ENCODE measurements at regions of chr14 and their contacts with region 1.

Region 1: DNA sequence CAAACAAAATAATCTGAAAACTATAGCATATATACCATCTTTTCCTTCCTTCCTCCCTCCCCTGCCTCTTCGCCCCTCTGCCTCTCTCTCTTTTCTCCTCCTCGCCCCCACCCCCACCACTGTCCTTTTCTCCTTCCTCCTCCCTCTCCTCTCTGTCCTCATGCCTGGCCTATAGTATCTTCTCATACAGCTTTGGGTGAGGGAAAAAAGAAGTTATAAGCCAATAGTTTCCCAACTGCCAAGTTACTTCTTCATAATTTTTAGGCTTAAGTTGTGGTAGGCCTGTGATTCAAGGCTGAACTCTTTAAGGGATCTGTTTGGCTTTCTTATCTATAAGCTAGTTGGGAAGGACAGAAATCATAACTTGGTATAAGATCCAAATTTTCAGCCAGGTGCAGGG is 9.1 kb downstream of the TMED10 start:
- DNase-seq: no peak
- H3K4me3 ChIP-seq: no peak overlapping the region
- H3K27ac ChIP-seq: no peak overlapping the region
- H3K4me1 ChIP-seq: peaks cover 15% of the 10 kb centered on the region; the same call in 1 of the 2 replicates
- H3K27me3 ChIP-seq: no peaks in the 10 kb centered on the region
- CTCF ChIP-seq: no peak

Region 2: GRCh38 chr14:75188520-75189268 is 21.4 kb after region 1 on chr14:
- CTCF ChIA-PET with region 1: interaction called, 10 read pairs
- POLR2A ChIA-PET with region 1: no interaction called
- intact Hi-C with region 1: no loop called
- DNase-seq: no peak
- H3K4me3 ChIP-seq: no peak overlapping the region
- H3K27ac ChIP-seq: no peak overlapping the region
- H3K4me1 ChIP-seq: peaks cover 31% of the 10 kb centered on the region
- H3K27me3 ChIP-seq: no peaks in the 10 kb centered on the region
- CTCF ChIP-seq: no peak

Region 3: GRCh38 chr14:75301666-75302325 is 134.5 kb after region 1 on chr14:
- CTCF ChIA-PET with region 1: interaction called, 16 read pairs
- POLR2A ChIA-PET with region 1: interaction called, 15 read pairs
- intact Hi-C with region 1: no loop called
- DNase-seq: no peak
- H3K4me3 ChIP-seq: no peak overlapping the region
- H3K27ac ChIP-seq: no peak overlapping the region
- H3K4me1 ChIP-seq: peaks cover 22% of the 10 kb centered on the region
- H3K27me3 ChIP-seq: no peaks in the 10 kb centered on the region
- CTCF ChIP-seq: no peak

Region 4: GRCh38 chr14:76432827-76433752 is 1265.8 kb after region 1 on chr14:
- CTCF ChIA-PET with region 1: no interaction called
- POLR2A ChIA-PET with region 1: no interaction called
- intact Hi-C with region 1: no loop called
- DNase-seq: no peak
- H3K4me3 ChIP-seq: no peak overlapping the region
- H3K27ac ChIP-seq: no peak overlapping the region
- H3K4me1 ChIP-seq: no peaks in the 10 kb centered on the region
- H3K27me3 ChIP-seq: peaks cover 98% of the 10 kb centered on the region
- CTCF ChIP-seq: no peak

Measured in PC-9 (cell line).